Activated B cell treated with CpG ODN at 0.5 μM for 24 hours (primary cell): ENCODE measurements at regions of chr11 and their contacts with region 1.

Region 1: GRCh38 chr11:116927163-116927974 is 89.9 kb upstream of the APOA1 start:
- DNase-seq: no peak
- ATAC-seq: peak; percentile 40
- H3K4me3 Mint-ChIP-seq: peak overlapping the region; percentile 50
- H3K27ac Mint-ChIP-seq: peak overlapping the region; percentile 88
- H3K4me1 Mint-ChIP-seq: peaks cover 91% of the 10 kb centered on the region
- H3K27me3 Mint-ChIP-seq: no peaks in the 10 kb centered on the region
- CTCF ChIP-seq: no peak

Region 2: DNA sequence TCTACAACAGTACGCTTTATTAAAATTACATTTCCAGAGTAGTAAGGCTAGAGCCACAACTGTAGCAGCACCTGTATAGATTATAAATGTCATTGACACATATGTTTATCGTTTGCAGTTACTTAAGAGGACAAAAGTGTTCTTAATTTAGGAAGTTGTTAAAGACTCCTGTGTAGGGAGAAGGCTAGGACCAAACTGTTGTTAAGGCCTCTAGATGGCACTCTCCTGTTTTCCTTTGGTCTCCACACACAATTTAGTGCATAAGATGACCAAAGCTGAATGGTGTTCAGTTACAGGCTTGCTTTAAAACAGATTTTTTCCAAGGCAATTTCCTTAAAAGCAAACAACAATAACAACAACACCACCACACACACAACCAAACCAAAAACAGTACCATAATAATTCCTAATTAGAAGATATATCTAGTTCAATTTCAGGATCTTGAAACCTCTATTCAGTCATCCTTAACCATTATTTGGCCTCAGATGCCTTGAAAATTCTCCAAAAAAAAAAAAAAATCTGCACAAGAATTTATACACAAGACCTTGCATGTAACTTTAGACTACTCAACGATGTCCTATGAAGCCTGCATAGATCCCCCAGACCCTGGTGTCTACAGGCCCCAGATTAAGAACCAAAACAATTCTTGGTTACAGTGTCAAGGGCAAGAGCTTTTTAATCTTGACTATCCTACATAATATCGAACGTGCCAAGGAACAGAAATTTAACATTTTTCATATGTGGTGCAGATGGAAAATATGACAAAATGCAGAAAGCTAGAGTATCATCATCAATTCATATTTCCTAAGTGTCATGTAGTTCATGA is 47.4 kb before region 1 on chr11:
- CTCF ChIA-PET with region 1: interaction called, 10 read pairs
- POLR2A ChIA-PET with region 1: no interaction called
- intact Hi-C with region 1: loop called (anchors 2 kb)
- DNase-seq: no peak
- ATAC-seq: peak; percentile 72
- H3K4me3 Mint-ChIP-seq: no peak overlapping the region
- H3K27ac Mint-ChIP-seq: no peak overlapping the region
- H3K4me1 Mint-ChIP-seq: peaks cover 9% of the 10 kb centered on the region
- H3K27me3 Mint-ChIP-seq: no peaks in the 10 kb centered on the region
- CTCF ChIP-seq: no peak

Region 3: GRCh38 chr11:116948391-116948790 is 21.0 kb after region 1 on chr11:
- CTCF ChIA-PET with region 1: no interaction called
- POLR2A ChIA-PET with region 1: interaction called, 6 read pairs
- intact Hi-C with region 1: loop called (anchors 2 kb)
- DNase-seq: no peak
- ATAC-seq: peak; percentile 56
- H3K4me3 Mint-ChIP-seq: peak overlapping the region; percentile 52
- H3K27ac Mint-ChIP-seq: peak overlapping the region; percentile 59
- H3K4me1 Mint-ChIP-seq: peaks cover 31% of the 10 kb centered on the region
- H3K27me3 Mint-ChIP-seq: no peaks in the 10 kb centered on the region
- CTCF ChIP-seq: no peak

Region 4: GRCh38 chr11:116980136-116980793 is 52.9 kb after region 1 on chr11:
- CTCF ChIA-PET with region 1: interaction called, 3 read pairs
- POLR2A ChIA-PET with region 1: interaction called, 6 read pairs
- intact Hi-C with region 1: loop called (anchors 1 kb)
- DNase-seq: no peak
- ATAC-seq: peak; percentile 96
- H3K4me3 Mint-ChIP-seq: peak overlapping the region; percentile 81
- H3K27ac Mint-ChIP-seq: peak overlapping the region; percentile 94
- H3K4me1 Mint-ChIP-seq: peaks cover 77% of the 10 kb centered on the region
- H3K27me3 Mint-ChIP-seq: no peaks in the 10 kb centered on the region
- CTCF ChIP-seq: no peak

Region 5: DNA sequence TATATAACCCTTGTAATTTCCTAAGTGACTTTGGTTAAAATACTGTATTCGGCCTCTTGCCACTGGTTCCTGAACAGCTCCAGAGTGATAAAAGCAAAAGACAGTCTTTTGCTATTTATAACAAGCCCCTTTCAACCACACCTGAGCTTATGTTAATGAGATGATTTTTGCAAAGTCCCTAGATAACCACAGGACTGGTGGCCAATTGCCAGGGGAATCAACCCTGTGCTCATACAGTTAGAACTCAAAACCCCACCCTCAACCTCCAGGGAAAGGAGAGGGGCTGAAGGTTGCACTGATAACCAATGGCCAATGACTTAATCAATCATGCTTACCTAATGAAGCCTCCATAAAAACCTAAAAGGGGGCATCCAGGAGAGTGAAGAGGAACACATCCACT is 92.9 kb after region 1 on chr11:
- CTCF ChIA-PET with region 1: interaction called, 4 read pairs
- POLR2A ChIA-PET with region 1: interaction called, 3 read pairs
- intact Hi-C with region 1: loop called (anchors 2 kb)
- DNase-seq: no peak
- ATAC-seq: peak; percentile 86
- H3K4me3 Mint-ChIP-seq: peak overlapping the region; percentile 45
- H3K27ac Mint-ChIP-seq: peak overlapping the region; percentile 62
- H3K4me1 Mint-ChIP-seq: peaks cover 79% of the 10 kb centered on the region
- H3K27me3 Mint-ChIP-seq: no peaks in the 10 kb centered on the region
- CTCF ChIP-seq: no peak

Region 6: DNA sequence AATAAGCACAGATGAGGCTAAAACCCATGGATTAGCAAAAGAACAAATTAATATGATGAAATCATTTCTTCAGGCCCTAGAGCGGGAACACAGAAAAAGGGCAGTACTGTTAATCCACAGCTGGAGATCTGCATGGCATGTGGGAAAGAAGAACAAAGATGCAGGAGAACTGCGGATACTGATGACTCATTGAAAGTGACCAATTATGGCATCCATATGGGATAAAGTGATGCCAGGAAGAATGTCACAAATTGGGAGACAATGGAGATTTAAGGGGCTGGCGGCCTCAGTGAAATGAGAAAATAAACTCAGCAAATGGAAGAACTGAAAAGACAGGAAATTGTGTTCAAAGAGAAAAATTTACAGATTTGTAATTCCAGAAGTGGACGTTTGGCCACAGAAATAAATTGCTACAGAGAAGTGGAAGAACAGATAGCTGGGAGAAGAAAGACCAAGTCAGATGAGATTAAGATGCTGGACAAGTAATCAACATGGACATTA is 131.4 kb after region 1 on chr11:
- CTCF ChIA-PET with region 1: no interaction called
- POLR2A ChIA-PET with region 1: no interaction called
- intact Hi-C with region 1: loop called (anchors 1 kb)
- DNase-seq: no peak
- ATAC-seq: no peak
- H3K4me3 Mint-ChIP-seq: no peak overlapping the region
- H3K27ac Mint-ChIP-seq: peak overlapping the region; percentile 9
- H3K4me1 Mint-ChIP-seq: peaks cover 76% of the 10 kb centered on the region
- H3K27me3 Mint-ChIP-seq: no peaks in the 10 kb centered on the region
- CTCF ChIP-seq: no peak